Mammary epithelial cell (primary cell): ENCODE measurements at regions of chr2 and their contacts with region 1.

Region 1: DNA sequence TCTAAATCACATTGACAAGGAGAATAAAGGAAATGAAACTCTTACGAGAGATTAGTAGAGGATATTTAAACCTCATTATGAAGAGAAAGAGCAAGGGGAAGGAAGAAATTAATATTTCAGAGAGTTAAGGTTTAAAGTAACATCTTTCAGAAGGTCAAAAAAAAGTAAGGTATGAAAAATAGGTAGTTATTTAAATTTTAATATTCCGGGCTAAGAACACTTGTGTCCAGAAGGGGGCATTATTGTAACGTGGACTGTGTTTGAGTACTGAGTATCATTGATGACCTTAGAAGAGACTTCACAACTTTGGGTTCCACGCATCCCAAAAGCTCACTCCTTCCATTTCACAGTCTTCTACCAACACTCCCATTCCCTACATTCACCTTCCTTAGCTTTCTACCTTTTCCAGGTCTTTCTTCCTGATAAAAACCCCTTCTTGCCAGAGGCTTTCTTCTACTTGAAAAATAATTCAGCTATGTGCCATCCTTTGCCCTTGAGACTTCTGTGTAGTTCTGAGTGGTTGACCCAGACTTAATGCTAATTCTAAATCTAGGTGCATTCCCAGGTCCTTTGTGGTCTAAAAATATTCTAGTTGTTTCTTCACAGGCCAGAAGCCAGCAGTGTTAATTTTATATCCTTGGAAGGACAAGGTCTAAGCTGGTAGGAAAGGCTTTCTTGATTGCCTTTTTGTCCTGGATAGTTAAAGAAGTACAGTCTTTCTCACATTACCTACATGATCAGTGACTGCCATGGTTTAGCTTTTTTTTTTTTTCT is 16.5 kb downstream of the DYNC1I2 start:
- DNase-seq: peak; percentile 23
- H3K4me3 ChIP-seq: no peak overlapping the region
- H3K27ac ChIP-seq: no peak overlapping the region
- H3K4me1 ChIP-seq: peaks cover 9% of the 10 kb centered on the region
- H3K27me3 ChIP-seq: no peaks in the 10 kb centered on the region
- CTCF ChIP-seq: peak; percentile 41 to 54

Region 2: DNA sequence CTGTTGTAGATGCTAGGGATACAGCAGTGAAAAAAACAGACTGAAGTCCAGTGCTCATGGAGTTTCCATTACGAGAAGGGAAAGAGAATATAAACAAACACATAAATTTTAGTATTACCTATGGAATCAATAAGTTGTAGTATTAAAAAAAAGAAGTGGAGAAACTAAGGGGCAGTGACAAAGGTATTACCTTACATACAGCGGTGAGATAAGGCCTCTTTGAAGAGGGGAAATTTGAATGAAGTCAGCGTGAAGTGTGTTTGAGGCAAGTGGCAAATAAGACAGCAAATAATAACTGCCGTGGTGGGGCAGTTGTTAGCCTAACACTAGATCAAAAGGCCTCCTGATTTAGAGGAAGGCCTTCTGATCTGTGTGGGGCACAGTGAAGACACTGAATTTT is 601.0 kb before region 1 on chr2:
- CTCF ChIA-PET with region 1: no interaction called
- dilution Hi-C with region 1: no loop called
- in situ Hi-C with region 1: no loop called
- intact Hi-C with region 1: no loop called
- DNase-seq: no peak
- H3K4me3 ChIP-seq: no peak overlapping the region
- H3K27ac ChIP-seq: no peak overlapping the region
- H3K4me1 ChIP-seq: no peaks in the 10 kb centered on the region
- H3K27me3 ChIP-seq: no peaks in the 10 kb centered on the region
- CTCF ChIP-seq: no peak

Region 3: GRCh38 chr2:171553858-171554257 is 149.9 kb before region 1 on chr2:
- CTCF ChIA-PET with region 1: no interaction called
- dilution Hi-C with region 1: no loop called
- in situ Hi-C with region 1: no loop called
- intact Hi-C with region 1: no loop called
- DNase-seq: no peak
- H3K4me3 ChIP-seq: no peak overlapping the region
- H3K27ac ChIP-seq: no peak overlapping the region
- H3K4me1 ChIP-seq: peaks cover 7% of the 10 kb centered on the region
- H3K27me3 ChIP-seq: no peaks in the 10 kb centered on the region
- CTCF ChIP-seq: no peak

Region 4: DNA sequence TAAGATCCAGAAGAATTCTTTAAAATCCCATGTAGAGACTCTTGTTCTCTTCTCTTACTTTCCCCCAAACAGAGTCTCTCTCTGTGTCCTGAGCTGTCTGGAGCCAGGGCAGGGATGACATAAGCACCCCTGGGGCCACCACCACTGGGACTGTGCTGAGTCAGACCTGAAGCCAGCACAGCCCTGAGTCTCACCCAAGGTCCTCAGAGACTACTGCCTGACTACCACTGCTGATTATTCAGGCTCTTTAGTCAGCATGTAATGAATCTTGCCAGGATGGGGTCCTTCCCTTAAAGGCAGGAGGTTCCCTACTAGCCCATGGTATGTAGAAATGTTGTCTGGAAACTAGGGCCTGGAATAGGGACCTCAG is 51.4 kb before region 1 on chr2:
- CTCF ChIA-PET with region 1: no interaction called
- dilution Hi-C with region 1: no loop called
- in situ Hi-C with region 1: no loop called
- intact Hi-C with region 1: no loop called
- DNase-seq: peak; percentile 86
- H3K4me3 ChIP-seq: no peak overlapping the region
- H3K27ac ChIP-seq: peak overlapping the region; percentile 22
- H3K4me1 ChIP-seq: peaks cover 7% of the 10 kb centered on the region
- H3K27me3 ChIP-seq: no peaks in the 10 kb centered on the region
- CTCF ChIP-seq: no peak

Region 5: DNA sequence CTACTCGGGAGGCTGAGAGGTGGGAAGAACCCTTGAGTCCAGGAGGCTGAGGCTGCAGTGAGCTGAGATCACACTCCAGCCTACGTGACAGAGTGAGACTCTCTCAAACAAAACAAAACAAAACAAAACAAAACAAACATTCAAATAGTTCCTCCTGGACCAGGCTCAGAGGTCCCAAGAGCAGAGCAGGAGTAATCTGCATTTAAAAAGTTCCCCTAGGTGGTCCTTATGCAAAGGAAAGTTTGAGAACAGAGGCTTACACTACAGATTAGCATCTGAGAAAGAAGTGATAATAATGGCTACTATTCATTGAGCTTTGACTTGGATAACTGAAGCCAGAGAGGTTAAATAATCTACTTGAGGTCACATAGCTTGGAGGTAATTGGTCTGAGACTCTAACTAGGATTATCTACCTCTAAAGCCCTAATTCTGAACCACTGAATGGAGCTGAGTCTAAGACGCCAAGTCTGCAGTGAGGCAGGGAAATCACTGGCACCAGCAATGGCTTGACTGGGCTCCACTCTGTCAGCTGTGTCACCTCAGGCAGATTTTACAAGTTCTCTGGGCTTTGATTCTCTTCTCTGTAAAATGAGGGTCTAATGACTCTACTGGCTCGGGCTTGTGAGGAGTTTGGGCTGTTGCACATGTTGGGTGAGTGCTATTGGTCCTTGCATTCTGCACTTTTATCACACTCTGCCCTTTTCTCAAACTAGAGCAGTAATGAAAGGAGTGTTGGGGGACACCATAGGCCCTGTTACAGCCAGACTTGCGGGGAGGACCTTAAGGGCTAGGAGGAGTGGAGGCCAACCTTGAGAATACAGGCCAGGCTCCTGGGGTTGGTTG is 428.2 kb after region 1 on chr2:
- CTCF ChIA-PET with region 1: no interaction called
- dilution Hi-C with region 1: no loop called
- in situ Hi-C with region 1: no loop called
- intact Hi-C with region 1: loop called (anchors 5 kb)
- DNase-seq: no peak
- H3K4me3 ChIP-seq: no peak overlapping the region
- H3K27ac ChIP-seq: no peak overlapping the region
- H3K4me1 ChIP-seq: no peaks in the 10 kb centered on the region
- H3K27me3 ChIP-seq: no peaks in the 10 kb centered on the region
- CTCF ChIP-seq: no peak